Activated T-helper 1 cell treated with anti-CD3 and anti-CD28 coated beads, Interleukin-12 subunit alpha, Interleukin-12 subunit beta, Interleukin-2, Interleukin-4 antibody, amounts not matched to agents 30 ng/mL and 10 ng/mL and 1 ng/mL, durations not matched to agents 14 hours and 24 hours and 36 hours (primary cell): ENCODE measurements at regions of chr3 and their contacts with region 1.

Region 1: DNA sequence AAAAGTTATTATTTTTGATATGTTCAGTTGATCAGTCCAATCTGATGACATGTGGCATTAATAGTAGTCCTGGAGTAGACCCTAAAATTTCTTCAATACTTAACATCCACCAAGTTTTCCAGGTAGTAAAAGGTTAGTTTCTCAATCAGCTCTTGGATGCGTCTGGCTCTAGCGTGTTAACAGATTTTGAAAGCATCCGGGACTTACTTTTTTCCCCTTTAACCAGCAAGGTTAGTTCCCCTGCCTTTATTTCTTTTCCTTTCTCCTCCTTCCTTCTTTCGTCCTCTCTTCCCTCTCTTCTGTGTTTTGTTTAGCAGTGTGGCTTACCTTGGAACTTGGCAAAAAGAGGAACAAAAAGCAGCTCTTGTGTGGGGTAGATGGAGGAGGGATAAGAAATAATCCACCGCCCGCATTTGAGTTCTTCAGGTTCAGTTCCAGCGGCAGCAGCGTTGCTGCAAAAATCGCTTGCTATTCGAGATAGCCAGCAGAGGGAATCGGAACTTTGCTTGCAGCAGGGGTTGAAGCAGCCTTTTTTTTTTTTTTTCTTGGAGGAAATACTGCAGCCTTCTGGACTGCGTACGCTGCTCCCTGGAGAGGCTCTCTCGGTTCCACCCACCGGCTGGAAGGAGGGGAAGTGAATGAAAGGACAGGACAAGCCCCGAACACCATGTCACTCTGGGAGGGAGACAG is at the start of gene RBMS3:
- DNase-seq: no peak
- H3K4me3 Mint-ChIP-seq: peak within 1 kb of the TSS; percentile 87
- H3K27ac Mint-ChIP-seq: peak within 1 kb of the TSS; percentile 87
- H3K4me1 Mint-ChIP-seq: peaks cover 42% of the 10 kb centered on the region
- H3K27me3 Mint-ChIP-seq: peaks cover 6% of the 10 kb centered on the region
- total RNA-seq, gene RBMS3: 3.4 and 3.7 TPM in 2 replicates

Region 2: GRCh38 chr3:28348629-28349483 is 931.7 kb before region 1 on chr3 and contains the starts of genes AZI2 and ZCWPW2:
- intact Hi-C with region 1: loop called (anchors 10 kb)
- DNase-seq: peak; percentile 90
- H3K4me3 Mint-ChIP-seq: peak within 1 kb of the TSS; percentile 98
- H3K27ac Mint-ChIP-seq: peak within 1 kb of the TSS; percentile 98
- H3K4me1 Mint-ChIP-seq: peaks cover 66% of the 10 kb centered on the region
- H3K27me3 Mint-ChIP-seq: no peaks in the 10 kb centered on the region
- total RNA-seq, gene AZI2: 43.7 and 44.8 TPM in 2 replicates
- total RNA-seq, gene ZCWPW2: 0.24 TPM in 1 of 2 replicates, not detected in the other

Region 3: GRCh38 chr3:28916713-28917499 is 363.6 kb before region 1 on chr3:
- intact Hi-C with region 1: loop called (anchors 2 kb)
- DNase-seq: peak; percentile 9
- H3K4me3 Mint-ChIP-seq: no peak overlapping the region
- H3K27ac Mint-ChIP-seq: no peak overlapping the region
- H3K4me1 Mint-ChIP-seq: peaks cover 31% of the 10 kb centered on the region
- H3K27me3 Mint-ChIP-seq: peaks cover 10% of the 10 kb centered on the region

Region 4: GRCh38 chr3:29026286-29026685 is 254.3 kb before region 1 on chr3:
- intact Hi-C with region 1: loop called (anchors 2 kb)
- DNase-seq: no peak
- H3K4me3 Mint-ChIP-seq: no peak overlapping the region
- H3K27ac Mint-ChIP-seq: peak overlapping the region; percentile 7
- H3K4me1 Mint-ChIP-seq: peaks cover 10% of the 10 kb centered on the region
- H3K27me3 Mint-ChIP-seq: no peaks in the 10 kb centered on the region

Region 5: GRCh38 chr3:29186982-29187725 is 93.4 kb before region 1 on chr3:
- intact Hi-C with region 1: loop called (anchors 1 kb)
- DNase-seq: no peak
- H3K4me3 Mint-ChIP-seq: no peak overlapping the region
- H3K27ac Mint-ChIP-seq: peak overlapping the region; percentile 8
- H3K4me1 Mint-ChIP-seq: peaks cover 36% of the 10 kb centered on the region
- H3K27me3 Mint-ChIP-seq: no peaks in the 10 kb centered on the region